CD4-positive, alpha-beta T cell (primary cell): ENCODE measurements at regions of chr17 and their contacts with region 1.

Region 1: DNA sequence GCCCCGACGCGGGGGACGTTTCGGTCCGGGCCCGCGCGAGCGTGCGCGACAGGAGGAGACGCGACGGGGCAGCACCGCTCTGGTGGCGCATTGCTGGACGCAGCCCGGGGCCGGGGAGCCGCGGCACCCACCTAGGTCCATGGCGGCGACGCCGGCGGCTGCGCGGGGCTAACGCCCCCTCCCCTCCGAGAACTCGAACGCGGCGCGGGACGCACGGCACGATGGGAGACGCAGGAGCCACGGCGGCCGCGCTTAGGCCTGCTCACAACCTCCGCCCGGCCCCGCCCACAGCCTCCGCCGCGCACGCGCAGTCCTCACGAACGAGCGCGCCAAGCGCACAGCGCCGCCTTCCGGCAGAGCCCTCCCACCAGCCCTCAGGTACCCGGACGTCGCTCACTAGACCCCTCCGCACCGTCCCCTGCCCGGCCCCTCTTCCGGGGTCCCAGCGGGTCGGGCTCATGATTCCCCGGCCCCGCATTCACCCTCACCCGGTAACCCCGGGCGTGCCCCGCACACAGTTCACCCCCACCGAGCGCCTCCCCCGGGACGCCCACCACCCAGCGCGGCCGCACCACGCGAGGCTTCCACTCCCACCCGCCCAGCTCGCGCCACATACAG is at the start of gene GEMIN4:
- DNase-seq: peak; percentile 91 to 99 (median 98)
- ATAC-seq: peak; percentile 82
- H3K4me3 ChIP-seq: peak within 1 kb of the TSS; percentile 59
- H3K4me3 Mint-ChIP-seq: peak within 1 kb of the TSS; percentile 98
- H3K27ac ChIP-seq: peak within 1 kb of the TSS in 1 of 2 donors; percentile 65
- H3K27ac Mint-ChIP-seq: peak within 1 kb of the TSS; percentile 83
- H3K4me1 ChIP-seq: peaks cover 29% of the 10 kb centered on the region
- H3K4me1 Mint-ChIP-seq: peaks cover 44% of the 10 kb centered on the region
- H3K27me3 ChIP-seq: no peaks in the 10 kb centered on the region
- H3K27me3 Mint-ChIP-seq: no peaks in the 10 kb centered on the region
- CTCF ChIP-seq: peak; percentile 99
- total RNA-seq, gene GEMIN4: 16.0 to 18.0 TPM

Region 2: DNA sequence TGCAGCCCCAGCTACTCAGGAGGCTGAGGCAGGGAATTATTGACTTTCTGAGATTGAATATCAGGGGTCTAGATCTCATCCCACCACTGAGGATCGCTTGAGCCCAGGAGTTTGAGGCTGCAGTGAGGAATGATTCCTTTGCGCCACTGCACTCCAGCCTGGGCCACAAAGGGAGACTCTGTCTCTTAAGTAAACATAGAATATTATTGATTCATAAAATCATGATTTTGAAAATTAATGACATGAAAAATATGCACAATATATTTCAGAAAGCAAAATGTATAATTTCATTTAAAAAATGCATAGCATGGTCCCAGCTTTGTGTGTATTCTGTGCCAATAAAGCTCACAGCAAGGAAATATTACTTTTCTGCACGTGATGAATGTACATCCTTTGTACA is 35.9 kb before region 1 on chr17:
- CTCF ChIA-PET with region 1: no interaction called
- POLR2A ChIA-PET with region 1: interaction called, 7 read pairs
- intact Hi-C with region 1: loop called (anchors 1 to 2 kb)
- DNase-seq: no peak
- ATAC-seq: no peak
- H3K4me3 ChIP-seq: no peak overlapping the region
- H3K4me3 Mint-ChIP-seq: peak overlapping the region; percentile 77
- H3K27ac ChIP-seq: no peak overlapping the region
- H3K27ac Mint-ChIP-seq: no peak overlapping the region
- H3K4me1 ChIP-seq: peaks cover 27% of the 10 kb centered on the region
- H3K4me1 Mint-ChIP-seq: peaks cover 28% of the 10 kb centered on the region
- H3K27me3 ChIP-seq: no peaks in the 10 kb centered on the region
- H3K27me3 Mint-ChIP-seq: no peaks in the 10 kb centered on the region
- CTCF ChIP-seq: no peak

Region 3: GRCh38 chr17:732067-732901 is 19.8 kb before region 1 on chr17 and contains the start of gene TLCD3A:
- CTCF ChIA-PET with region 1: no interaction called
- POLR2A ChIA-PET with region 1: interaction called, 5 read pairs
- intact Hi-C with region 1: loop called in 1 of 2 experiments (anchors 2 kb)
- DNase-seq: peak in 11 of 14 experiments; percentile 16 to 75 (median 46)
- ATAC-seq: peak; percentile 68
- H3K4me3 ChIP-seq: peak within 1 kb of the TSS; percentile 52
- H3K4me3 Mint-ChIP-seq: peak within 1 kb of the TSS; percentile 87
- H3K27ac ChIP-seq: no peak within 1 kb of the TSS
- H3K27ac Mint-ChIP-seq: no peak within 1 kb of the TSS
- H3K4me1 ChIP-seq: peaks cover 14% of the 10 kb centered on the region
- H3K4me1 Mint-ChIP-seq: peaks cover 7% of the 10 kb centered on the region
- H3K27me3 ChIP-seq: peaks cover 8 to 13% of the 10 kb centered on the region in 2 experiments
- H3K27me3 Mint-ChIP-seq: peaks cover 26% of the 10 kb centered on the region
- CTCF ChIP-seq: no peak
- total RNA-seq, gene TLCD3A: 0.63 to 0.75 TPM

Region 4: DNA sequence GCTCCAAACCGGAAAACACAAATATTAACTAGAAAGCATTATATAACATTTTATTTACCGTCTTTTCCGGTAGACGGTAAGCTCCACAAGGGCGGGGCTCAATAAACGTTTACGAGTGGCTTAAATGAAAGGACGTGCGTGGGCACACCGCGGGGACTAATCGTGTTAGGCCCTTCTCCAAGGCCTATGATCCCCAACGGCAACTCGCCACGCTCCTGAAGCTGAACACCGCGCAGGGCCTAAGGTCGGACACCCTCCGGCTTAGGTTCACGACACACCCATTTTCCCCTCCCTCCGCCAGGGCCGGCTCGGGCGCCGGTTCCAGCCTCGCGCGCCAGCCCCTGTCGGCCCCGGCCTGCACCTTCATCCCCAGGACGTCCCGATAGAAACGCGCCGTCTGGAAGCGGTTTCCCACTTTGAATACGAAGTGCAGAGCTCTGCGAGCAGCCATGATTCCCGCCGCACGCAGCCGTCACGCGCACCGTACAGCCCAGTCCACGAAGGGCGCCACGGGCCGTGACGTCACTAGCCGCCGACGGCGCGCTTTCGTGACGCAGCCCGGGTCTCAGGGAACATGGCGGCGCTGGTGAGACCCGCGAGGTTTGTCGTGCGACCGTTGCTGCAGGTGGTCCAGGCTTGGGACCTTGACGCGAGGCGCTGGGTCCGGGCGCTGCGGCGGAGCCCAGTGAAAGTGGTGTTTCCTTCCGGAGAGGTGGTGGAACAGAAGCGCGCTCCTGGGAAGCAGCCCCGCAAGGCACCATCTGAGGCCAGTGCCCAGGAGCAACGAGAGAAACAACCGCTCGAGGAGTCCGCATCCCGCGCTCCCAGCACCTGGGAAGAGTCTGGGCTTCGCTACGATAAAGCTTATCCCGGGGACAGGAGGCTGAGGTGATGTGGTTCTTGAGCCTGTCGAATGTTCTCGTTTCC is 30.0 kb after region 1 on chr17 and contains the starts of genes GLOD4 and MRM3:
- CTCF ChIA-PET with region 1: interaction called, 13 read pairs
- POLR2A ChIA-PET with region 1: interaction called, 49 read pairs
- intact Hi-C with region 1: loop called (anchors 1 kb)
- DNase-seq: peak; percentile 86 to 98 (median 94)
- ATAC-seq: peak; percentile 91
- H3K4me3 ChIP-seq: peak within 1 kb of the TSS; percentile 71
- H3K4me3 Mint-ChIP-seq: peak within 1 kb of the TSS; percentile 100
- H3K27ac ChIP-seq: peak within 1 kb of the TSS; percentile 93 to 94
- H3K27ac Mint-ChIP-seq: peak within 1 kb of the TSS; percentile 99
- H3K4me1 ChIP-seq: peaks cover 27% of the 10 kb centered on the region
- H3K4me1 Mint-ChIP-seq: peaks cover 40% of the 10 kb centered on the region
- H3K27me3 ChIP-seq: no peaks in the 10 kb centered on the region
- H3K27me3 Mint-ChIP-seq: no peaks in the 10 kb centered on the region
- CTCF ChIP-seq: no peak
- total RNA-seq, gene GLOD4: 88.0 to 89.3 TPM
- total RNA-seq, gene MRM3: 40.8 to 44.1 TPM